Activated CD8-positive, alpha-beta memory T cell treated with anti-CD3 and anti-CD28 coated beads, Interleukin-2, amount 10 ng/mL, durations not matched to agents 7 days and 5 days (primary cell): ENCODE measurements at regions of chr6 and their contacts with region 1.

Region 1: DNA sequence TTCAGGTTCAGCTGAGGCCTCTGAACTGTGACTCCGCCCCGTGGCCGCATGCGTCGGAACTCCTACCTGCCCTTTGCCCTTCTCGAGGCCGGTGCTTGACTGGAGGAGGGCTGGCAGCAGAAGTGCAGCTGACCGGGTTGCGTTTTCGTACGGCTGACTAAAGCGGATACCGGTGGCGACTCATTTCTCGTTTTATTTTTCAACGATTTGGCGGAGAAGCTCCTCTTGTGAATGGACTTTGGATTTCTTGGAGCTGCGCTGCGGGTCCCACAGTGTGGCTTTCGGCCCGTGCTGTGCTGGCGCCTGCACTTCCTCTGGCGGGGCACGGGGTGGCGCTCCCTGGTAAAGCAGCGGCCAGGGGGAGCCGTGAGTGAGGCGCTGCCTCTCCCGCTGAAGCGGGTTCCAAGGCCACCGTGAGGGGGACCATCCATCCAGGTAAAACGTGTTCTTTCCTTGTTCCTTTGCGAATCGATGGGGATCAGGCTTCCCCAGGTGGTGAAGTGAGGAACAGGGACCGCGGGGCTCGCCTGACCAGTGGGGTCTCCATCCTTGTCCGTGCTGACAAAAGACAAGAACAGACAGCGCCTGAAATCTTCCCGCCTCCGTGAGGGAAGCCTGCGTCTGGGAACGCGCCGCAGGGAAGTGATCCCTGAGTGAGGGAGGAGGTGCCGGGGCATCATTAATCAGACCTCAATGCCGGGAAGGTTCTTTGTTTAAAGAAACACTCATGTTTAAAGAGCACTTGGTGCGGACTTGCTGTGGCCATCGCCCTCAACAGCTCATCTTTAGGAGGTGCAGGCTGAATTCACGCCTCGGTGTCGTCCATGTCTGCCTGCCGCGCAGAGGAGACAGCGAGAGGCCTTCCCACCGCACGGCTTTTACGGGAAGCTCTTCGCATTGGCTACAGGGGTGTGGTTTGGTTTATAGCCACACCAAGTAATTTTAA is 38.8 kb downstream of the ERMARD start:
- DNase-seq: peak; percentile 79
- ATAC-seq: peak; percentile 98
- H3K4me3 Mint-ChIP-seq: peak overlapping the region; percentile 67
- H3K27ac Mint-ChIP-seq: no peak overlapping the region
- H3K4me1 Mint-ChIP-seq: peaks cover 15% of the 10 kb centered on the region
- H3K27me3 Mint-ChIP-seq: peaks cover 53% of the 10 kb centered on the region

Region 2: GRCh38 chr6:169800668-169801395 is 10.6 kb after region 1 on chr6:
- CTCF ChIA-PET with region 1: interaction called, 74 read pairs
- DNase-seq: peak; percentile 30
- ATAC-seq: no peak
- H3K4me3 Mint-ChIP-seq: no peak overlapping the region
- H3K27ac Mint-ChIP-seq: no peak overlapping the region
- H3K4me1 Mint-ChIP-seq: peaks cover 34% of the 10 kb centered on the region
- H3K27me3 Mint-ChIP-seq: peaks cover 76% of the 10 kb centered on the region

Region 3: GRCh38 chr6:170529839-170530469 is 739.7 kb after region 1 on chr6:
- CTCF ChIA-PET with region 1: interaction called, 40 read pairs
- DNase-seq: peak; percentile 78
- ATAC-seq: peak; percentile 85
- H3K4me3 Mint-ChIP-seq: no peak overlapping the region
- H3K27ac Mint-ChIP-seq: no peak overlapping the region
- H3K4me1 Mint-ChIP-seq: peaks cover 10% of the 10 kb centered on the region
- H3K27me3 Mint-ChIP-seq: peaks cover 7% of the 10 kb centered on the region